ENCODE measurements at regions of chr6 and their contacts with region 1.

Region 1: DNA sequence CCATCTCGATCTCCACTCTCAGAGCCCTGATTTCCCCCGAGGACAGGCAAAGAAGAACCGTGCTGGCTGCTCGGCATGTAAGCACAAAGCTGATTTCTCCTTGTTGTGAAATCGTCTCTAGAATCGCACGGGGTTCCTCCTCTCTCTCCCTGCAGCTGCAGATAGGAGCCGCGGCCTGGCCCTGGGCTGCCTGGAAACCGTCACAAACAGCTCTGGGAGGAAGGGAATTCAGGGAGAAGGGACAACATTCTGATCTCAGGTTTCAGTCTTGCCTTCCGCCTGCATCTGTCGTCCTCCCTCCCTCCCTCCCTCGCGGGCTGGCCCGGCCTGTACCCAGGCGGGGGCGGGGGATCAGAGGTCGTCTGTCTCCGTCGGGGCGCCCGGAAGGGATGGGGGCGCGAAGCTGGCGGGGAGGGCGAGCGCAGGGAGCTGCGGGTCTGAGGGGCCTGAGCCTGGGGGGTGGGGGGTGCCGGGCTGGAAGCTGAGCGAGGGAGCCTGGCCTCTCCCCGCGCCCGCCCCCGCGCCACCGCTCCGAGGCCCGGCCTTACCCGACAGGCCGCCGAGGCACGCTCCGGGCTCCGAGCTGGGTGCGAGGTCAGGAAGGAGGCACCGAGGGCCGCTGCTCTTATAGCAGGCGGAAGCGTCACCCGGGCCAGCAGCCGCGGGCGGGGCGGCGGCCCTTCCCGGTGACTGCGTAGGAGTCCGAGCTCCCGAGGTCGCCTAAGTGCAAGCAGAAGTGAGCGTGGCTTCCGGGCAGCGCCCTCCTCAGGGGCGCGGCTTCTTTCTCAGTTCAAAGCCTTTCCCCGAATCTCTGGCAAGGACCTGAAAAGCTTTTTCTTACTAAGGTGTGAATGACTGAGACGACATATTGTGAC is at the start of gene SERPINB1:
- DNase-seq: peak; percentile 22 to 96 (median 61)

Region 2: GRCh38 chr6:2770171-2770570 is 71.3 kb before region 1 on chr6:
- intact Hi-C with region 1: loop called (anchors 10 kb)
- DNase-seq: peak in 1 of 10 donors; percentile 87

Region 3: DNA sequence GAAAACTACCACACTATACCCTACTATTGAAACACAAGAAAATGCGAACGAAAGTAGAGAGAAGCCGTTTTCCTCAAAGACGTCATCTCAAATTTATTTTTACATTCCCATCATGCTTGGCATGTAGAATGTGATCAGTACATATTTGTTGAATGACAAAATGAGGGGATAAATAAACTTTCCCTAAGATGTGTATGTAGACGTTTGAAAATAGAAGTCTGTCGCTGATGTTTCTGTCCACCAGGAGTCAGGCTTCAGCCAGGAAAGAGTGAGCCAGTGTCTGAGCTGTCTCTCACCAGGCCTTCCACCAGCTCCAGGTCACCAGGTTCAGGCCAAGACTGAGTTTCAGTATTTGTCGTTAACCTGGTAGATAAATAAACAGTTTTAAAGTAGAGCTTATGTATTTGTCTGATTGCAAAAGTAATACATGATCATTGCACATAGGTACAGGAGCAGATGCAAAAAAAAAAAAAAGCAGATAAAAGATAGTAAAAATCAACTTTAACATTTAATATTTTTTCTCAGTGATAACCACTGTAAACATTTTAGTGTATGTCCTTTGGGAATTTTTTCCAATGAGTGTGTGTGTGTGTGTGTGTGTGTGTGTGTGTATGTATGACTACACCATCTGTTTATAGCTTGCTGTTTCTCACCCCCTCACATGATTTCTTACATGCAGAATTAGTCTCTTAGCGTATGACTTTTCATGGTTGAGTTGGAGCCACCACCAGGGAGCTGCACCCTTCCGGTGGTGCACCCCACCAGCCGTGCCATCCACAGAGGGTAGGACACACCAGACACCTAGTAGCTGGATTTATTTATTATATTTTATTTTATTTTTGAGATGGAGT is 50.2 kb before region 1 on chr6:
- intact Hi-C with region 1: loop called (anchors 1 kb)
- DNase-seq: peak in 5 of 10 donors; percentile 62 to 93 (median 64)

Region 4: DNA sequence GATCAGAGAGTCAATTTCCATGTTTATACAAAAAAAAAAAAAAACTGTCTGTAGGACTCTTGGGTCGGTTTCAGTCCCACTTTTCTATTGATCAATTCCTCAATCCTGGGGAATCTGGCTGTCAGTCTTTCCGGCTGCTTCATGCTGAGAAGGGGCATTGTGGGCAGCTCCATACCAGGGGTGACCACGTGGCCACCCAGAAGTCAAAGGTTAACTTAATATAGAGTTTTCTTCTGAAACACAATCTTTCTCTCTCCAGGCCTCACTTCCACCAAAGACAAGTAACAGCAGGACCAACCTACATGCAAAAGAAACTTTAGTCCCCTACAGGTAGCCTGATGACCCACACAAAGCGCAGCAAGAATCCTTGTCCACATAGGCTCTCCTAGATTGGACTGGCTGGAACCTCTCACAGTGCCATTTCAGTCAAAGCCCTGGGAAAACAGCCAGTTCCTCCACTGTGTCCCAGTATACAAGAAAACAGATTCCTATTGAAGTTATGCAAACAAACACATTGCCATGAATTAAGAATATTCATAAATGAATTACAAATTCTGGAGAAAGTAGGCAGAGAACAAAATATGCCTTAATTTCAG is 80.1 kb after region 1 on chr6:
- intact Hi-C with region 1: no loop called
- DNase-seq: peak in 2 of 10 donors; percentile 49 to 62

Region 5: GRCh38 chr6:2976571-2977085 is 135.1 kb after region 1 on chr6:
- intact Hi-C with region 1: no loop called
- DNase-seq: no peak

Region 6: DNA sequence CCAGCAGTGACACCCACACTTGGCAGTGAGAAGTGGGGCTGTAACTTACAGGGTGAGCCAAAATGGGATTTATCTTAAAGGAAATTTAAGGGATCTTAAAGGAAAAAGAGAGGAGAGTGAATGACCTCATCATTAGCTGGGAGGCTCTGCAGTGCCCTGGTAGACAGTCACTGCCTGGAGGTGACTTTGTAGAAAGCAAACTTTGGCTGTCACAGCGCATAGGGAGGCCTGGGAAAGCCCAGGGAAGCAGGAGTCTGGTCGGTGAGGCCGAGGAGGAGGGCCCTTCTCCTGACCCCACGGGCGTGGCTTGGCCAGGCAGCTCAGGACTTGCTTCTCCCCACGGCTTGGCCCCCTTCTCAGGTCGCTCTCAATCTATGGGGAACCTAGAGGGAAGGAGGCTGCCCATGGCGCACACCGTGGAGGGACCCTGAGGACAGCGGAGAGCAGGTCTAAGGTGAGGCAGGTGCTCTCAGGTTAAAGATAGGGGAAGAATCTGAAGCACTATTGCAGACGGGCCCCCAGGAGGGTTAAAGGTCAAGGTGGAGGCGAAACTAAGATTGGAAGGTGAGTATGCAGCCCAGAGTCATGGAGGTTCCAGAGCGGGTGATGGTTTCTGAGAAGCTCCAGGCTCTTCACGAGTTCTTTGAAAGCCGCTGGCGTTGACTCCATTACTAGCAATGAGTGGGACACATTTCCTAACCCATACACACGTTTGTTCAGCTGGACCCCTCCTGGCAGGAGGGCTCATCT is 211.2 kb after region 1 on chr6:
- intact Hi-C with region 1: loop called (anchors 10 kb)
- DNase-seq: no peak